Mammary epithelial cell (primary cell): ENCODE measurements at regions of chr16 and their contacts with region 1.

Region 1: DNA sequence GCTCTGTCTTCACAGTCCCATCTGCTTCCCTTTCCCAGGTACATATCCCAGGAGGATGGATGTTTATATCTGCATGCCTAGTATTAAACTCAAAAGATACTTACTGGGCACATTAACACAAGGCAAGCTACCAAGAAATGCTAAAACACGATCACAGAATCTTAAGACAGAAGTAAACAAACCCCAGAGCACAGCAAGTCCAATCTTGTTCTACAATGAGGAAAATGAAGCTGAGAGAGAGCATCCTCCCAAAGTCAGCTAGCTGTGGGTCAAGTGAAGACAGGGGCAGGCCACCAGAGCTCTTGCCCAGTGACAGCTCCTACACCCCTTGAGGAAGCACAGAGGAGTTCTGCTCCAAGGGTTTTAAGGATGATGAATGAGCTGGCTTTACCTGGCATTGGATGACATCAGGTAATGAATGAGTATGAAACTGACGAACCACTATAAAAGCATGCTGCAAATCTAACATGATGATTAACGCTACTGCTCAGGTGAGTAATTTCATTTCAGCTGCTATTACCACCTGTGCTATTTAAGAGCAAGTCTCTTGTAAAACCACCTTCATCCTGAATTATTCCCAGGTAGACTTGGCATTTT is 20.3 kb downstream of the XPO6 start:
- DNase-seq: peak; percentile 93
- H3K4me3 ChIP-seq: no peak overlapping the region
- H3K27ac ChIP-seq: peak overlapping the region; percentile 6
- H3K4me1 ChIP-seq: peaks cover 37% of the 10 kb centered on the region
- H3K27me3 ChIP-seq: no peaks in the 10 kb centered on the region
- CTCF ChIP-seq: no peak

Region 2: DNA sequence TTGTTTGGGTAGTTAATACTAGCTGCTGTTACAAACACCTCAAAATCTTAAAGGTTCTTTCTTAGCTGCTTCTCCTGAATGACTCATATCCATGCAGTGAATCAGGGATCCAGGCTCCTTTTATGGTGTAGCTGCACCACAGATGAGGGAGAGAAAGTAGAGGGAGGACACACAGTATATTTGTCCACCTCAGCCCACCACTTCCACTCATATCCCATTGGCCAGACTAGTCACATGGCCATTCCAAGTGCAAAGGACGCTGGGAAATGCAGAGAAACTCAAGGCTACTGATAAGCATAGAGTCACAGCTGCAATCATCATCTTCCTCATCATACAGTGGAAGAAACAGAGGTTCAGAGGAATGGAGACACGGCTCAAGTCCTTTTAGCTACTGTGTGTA is 191.8 kb before region 1 on chr16:
- CTCF ChIA-PET with region 1: no interaction called
- dilution Hi-C with region 1: no loop called
- in situ Hi-C with region 1: no loop called
- intact Hi-C with region 1: no loop called
- DNase-seq: peak; percentile 43
- H3K4me3 ChIP-seq: no peak overlapping the region
- H3K27ac ChIP-seq: no peak overlapping the region
- H3K4me1 ChIP-seq: no peaks in the 10 kb centered on the region
- H3K27me3 ChIP-seq: no peaks in the 10 kb centered on the region
- CTCF ChIP-seq: no peak

Region 3: DNA sequence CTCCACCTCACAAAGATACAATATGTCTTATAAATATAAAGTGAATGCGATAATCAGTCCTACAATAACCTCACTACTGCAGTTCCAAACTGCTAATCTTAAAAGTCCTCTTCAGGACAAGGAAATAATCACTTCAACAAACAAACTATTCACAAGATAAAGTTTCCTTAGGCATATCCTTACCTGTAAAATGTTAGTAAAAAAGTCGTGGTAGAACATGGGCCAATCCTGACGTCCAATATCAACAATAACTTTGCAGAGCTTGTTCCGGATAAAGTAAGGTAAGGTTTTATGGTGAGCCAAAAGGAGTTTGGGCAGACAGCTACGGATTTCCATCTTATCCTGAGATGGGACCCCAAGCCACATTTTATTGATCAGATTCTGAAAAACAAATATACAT is 15.7 kb before region 1 on chr16:
- CTCF ChIA-PET with region 1: no interaction called
- dilution Hi-C with region 1: no loop called
- in situ Hi-C with region 1: no loop called
- intact Hi-C with region 1: loop called (anchors 2 kb)
- DNase-seq: no peak
- H3K4me3 ChIP-seq: no peak overlapping the region
- H3K27ac ChIP-seq: no peak overlapping the region
- H3K4me1 ChIP-seq: peaks cover under 1% of the 10 kb centered on the region
- H3K27me3 ChIP-seq: no peaks in the 10 kb centered on the region
- CTCF ChIP-seq: no peak

Region 4: GRCh38 chr16:28211712-28212534 is 20.5 kb after region 1 on chr16 and contains the start of gene XPO6:
- CTCF ChIA-PET with region 1: no interaction called
- dilution Hi-C with region 1: no loop called
- in situ Hi-C with region 1: no loop called
- intact Hi-C with region 1: loop called (anchors 1 kb)
- DNase-seq: peak; percentile 90
- H3K4me3 ChIP-seq: peak within 1 kb of the TSS; percentile 75 to 83 (median 77)
- H3K27ac ChIP-seq: peak within 1 kb of the TSS; percentile 74
- H3K4me1 ChIP-seq: peaks cover 14% of the 10 kb centered on the region
- H3K27me3 ChIP-seq: no peaks in the 10 kb centered on the region
- CTCF ChIP-seq: no peak
- total RNA-seq, gene XPO6: 81.0 to 166 TPM

Region 5: GRCh38 chr16:28237754-28238357 is 46.4 kb after region 1 on chr16:
- CTCF ChIA-PET with region 1: no interaction called
- dilution Hi-C with region 1: loop called (anchors 5 kb)
- in situ Hi-C with region 1: no loop called
- intact Hi-C with region 1: no loop called
- DNase-seq: no peak
- H3K4me3 ChIP-seq: no peak overlapping the region
- H3K27ac ChIP-seq: no peak overlapping the region
- H3K4me1 ChIP-seq: no peaks in the 10 kb centered on the region
- H3K27me3 ChIP-seq: no peaks in the 10 kb centered on the region
- CTCF ChIP-seq: no peak